ENCODE measurements at regions of chr4 and their contacts with region 1.

Region 1: DNA sequence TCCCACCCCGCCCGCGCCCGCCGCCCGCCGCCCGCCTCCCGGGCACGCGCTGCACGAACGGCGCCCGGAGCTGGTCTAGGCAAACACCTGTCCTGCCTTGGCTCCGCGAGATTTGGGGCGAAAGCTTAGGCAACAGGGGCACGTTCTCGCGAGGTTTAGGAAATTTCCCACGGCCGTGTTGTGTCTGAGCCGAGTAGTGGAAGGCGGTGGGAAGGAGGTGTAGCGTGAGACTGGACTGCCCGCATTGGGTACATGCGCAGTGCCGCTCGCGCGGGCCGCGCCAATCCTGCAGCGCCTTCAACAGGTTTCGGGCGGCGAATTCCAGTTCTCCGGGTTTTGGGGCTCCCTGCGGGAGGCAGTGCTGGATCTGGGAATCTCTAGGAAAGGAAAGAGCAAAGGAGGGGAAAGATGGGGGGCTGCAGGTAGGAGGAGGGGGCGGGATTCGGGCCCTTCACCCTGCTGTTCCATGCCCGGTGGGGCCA is 1.3 kb upstream of the RBPJ start:
- DNase-seq: peak; percentile 98 to 99
- H3K4me3 ChIP-seq: peak overlapping the region; percentile 77 to 79
- H3K27ac ChIP-seq: peak overlapping the region; percentile 97 to 99
- H3K4me1 ChIP-seq: peaks cover 0 to 22% of the 10 kb centered on the region in 2 donors
- H3K27me3 ChIP-seq: no peaks in the 10 kb centered on the region
- CTCF ChIP-seq: peak in 2 of 3 experiments; percentile 4 to 14

Region 2: GRCh38 chr4:25913851-25914669 is 405.4 kb before region 1 on chr4 and contains the start of gene SMIM20:
- intact Hi-C with region 1: loop called (anchors 5 kb)
- DNase-seq: peak; percentile 69 to 96
- H3K4me3 ChIP-seq: peak within 1 kb of the TSS; percentile 70 to 74
- H3K27ac ChIP-seq: peak within 1 kb of the TSS; percentile 83 to 84
- H3K4me1 ChIP-seq: peaks cover 0 to 9% of the 10 kb centered on the region in 2 donors
- H3K27me3 ChIP-seq: no peaks in the 10 kb centered on the region
- CTCF ChIP-seq: no peak
- total RNA-seq, gene SMIM20: 5.7 TPM

Region 3: GRCh38 chr4:26022346-26023202 is 296.9 kb before region 1 on chr4:
- intact Hi-C with region 1: loop called (anchors 2 kb)
- DNase-seq: peak in 1 of 2 donors; percentile 87
- H3K4me3 ChIP-seq: peak overlapping the region in 1 of 2 donors; percentile 35
- H3K27ac ChIP-seq: peak overlapping the region; percentile 58 to 67
- H3K4me1 ChIP-seq: peaks cover 8 to 33% of the 10 kb centered on the region in 2 donors
- H3K27me3 ChIP-seq: no peaks in the 10 kb centered on the region
- CTCF ChIP-seq: no peak

Region 4: GRCh38 chr4:26048378-26048882 is 271.1 kb before region 1 on chr4:
- intact Hi-C with region 1: loop called (anchors 2 kb)
- DNase-seq: peak in 1 of 2 donors; percentile 90
- H3K4me3 ChIP-seq: peak overlapping the region; percentile 12 to 35
- H3K27ac ChIP-seq: peak overlapping the region; percentile 87 to 93
- H3K4me1 ChIP-seq: peaks cover 10 to 22% of the 10 kb centered on the region in 2 donors
- H3K27me3 ChIP-seq: no peaks in the 10 kb centered on the region
- CTCF ChIP-seq: no peak

Region 5: DNA sequence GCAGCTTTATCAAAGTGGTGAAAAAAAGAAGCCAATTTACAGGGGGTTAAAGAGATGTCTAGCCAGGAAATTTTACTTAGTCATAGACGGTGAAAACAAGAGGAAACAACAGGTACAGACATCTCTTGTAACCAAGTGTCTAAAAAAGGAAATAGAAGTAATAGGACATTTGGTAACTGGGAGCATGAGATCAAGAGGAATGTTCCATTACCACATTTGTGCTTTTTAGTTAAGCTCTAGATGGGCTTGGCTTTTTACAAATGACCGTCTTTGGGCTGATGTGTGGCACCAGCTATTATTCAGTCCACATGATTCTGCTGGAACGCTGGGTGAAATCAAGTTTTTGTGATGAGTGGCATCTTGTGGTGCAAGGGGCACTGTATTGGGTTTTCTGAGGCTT is 226.0 kb before region 1 on chr4:
- intact Hi-C with region 1: loop called (anchors 1 kb)
- DNase-seq: peak in 1 of 2 donors; percentile 74
- H3K4me3 ChIP-seq: no peak overlapping the region
- H3K27ac ChIP-seq: peak overlapping the region; percentile 62 to 66
- H3K4me1 ChIP-seq: peaks cover 0 to 6% of the 10 kb centered on the region in 2 donors
- H3K27me3 ChIP-seq: no peaks in the 10 kb centered on the region
- CTCF ChIP-seq: no peak

Region 6: DNA sequence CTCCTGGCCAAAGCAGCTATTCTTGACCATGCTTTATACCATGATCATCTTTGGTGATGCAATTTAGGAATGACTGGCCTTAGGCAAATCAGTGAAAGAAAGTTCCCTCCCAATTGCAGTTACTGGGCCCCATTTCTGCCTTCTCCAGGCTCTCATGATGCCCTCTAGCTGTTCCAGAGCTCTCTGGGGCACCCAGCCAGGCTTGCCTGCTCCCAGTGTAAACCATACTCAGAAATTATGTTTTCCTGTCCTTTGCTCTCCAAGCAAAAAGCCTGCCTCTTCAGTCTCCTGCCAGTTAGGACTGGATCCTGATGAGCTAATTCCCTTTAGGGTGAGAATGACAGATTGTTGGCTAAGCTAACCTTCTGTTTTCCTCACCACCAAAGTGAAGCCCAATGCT is 84.0 kb before region 1 on chr4:
- intact Hi-C with region 1: loop called (anchors 1 kb)
- DNase-seq: peak in 1 of 2 donors; percentile 87
- H3K4me3 ChIP-seq: no peak overlapping the region
- H3K27ac ChIP-seq: peak overlapping the region; percentile 34 to 58
- H3K4me1 ChIP-seq: peaks cover 0 to 19% of the 10 kb centered on the region in 2 donors
- H3K27me3 ChIP-seq: no peaks in the 10 kb centered on the region
- CTCF ChIP-seq: peak in 1 of 3 experiments; percentile 22

Region 7: GRCh38 chr4:26356081-26356501 is 36.6 kb after region 1 on chr4:
- intact Hi-C with region 1: no loop called
- DNase-seq: no peak
- H3K4me3 ChIP-seq: no peak overlapping the region
- H3K27ac ChIP-seq: no peak overlapping the region
- H3K4me1 ChIP-seq: no peaks in the 10 kb centered on the region
- H3K27me3 ChIP-seq: no peaks in the 10 kb centered on the region
- CTCF ChIP-seq: no peak

Region 8: DNA sequence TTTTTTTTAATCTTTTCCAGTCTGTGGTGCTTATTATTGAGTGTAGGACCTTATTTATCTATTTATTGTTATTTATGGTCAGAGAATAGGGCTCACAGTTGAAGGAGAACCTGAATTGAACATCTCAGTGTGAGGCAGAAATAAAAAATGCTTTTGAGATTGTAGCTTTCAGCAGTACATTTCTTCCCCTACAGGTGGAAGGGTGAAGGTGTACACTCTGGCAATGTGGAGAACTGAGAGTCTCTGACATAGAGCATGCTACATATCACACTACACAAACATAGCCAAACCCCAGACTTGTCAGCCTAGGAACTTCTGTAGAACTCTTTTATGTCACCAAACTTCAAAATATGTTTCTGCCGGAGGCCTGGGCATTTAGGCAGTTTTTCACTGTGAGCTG is 681.3 kb after region 1 on chr4:
- intact Hi-C with region 1: loop called (anchors 10 kb)
- DNase-seq: no peak
- H3K4me3 ChIP-seq: no peak overlapping the region
- H3K27ac ChIP-seq: no peak overlapping the region
- H3K4me1 ChIP-seq: peaks cover 0 to 2% of the 10 kb centered on the region in 2 donors
- H3K27me3 ChIP-seq: no peaks in the 10 kb centered on the region
- CTCF ChIP-seq: no peak